GM10248 (cell line): ENCODE measurements at regions of chr1 and their contacts with region 1.

Region 1: GRCh38 chr1:116842654-116843053 is 67.1 kb upstream of the PTGFRN start:
- DNase-seq: no peak
- CTCF ChIP-seq: no peak

Region 2: DNA sequence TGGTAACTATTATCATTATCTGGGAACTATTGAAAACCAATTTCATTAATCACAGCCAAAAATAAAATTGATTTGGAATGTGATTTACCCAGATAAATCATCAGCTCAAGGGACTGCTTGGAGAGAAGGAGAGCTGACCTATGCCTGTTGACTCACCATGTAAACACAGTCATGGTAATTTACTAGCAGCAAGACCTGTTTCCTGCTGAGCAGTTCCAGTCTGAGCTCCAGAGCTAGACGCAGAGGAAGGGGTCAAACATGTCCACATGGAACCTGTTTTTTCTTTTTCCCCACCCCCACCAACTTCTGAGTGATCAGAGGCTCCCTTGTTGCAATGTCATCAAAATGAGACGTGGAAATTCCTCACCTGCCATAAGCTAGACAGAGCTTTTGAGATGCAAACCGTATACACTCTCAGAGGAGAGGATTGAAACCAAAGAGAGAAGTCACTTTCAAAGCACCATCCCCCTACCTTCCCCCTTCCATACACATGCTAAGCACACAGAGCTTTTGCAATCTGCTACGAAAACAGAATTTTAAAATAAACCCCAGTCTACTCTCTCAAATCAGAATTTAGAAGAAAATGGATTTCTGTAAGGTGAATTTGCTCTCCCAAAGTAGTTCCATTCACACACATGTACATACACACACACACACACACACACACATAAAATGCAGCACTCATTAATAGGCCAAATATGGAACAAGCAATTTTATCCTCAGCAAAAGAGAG is 11.2 kb after region 1 on chr1:
- CTCF ChIA-PET with region 1: interaction called, 12 read pairs
- POLR2A ChIA-PET with region 1: interaction called, 4 read pairs
- DNase-seq: no peak
- CTCF ChIP-seq: no peak